ENCODE measurements at regions of chr15 and their contacts with region 1.

Region 1: DNA sequence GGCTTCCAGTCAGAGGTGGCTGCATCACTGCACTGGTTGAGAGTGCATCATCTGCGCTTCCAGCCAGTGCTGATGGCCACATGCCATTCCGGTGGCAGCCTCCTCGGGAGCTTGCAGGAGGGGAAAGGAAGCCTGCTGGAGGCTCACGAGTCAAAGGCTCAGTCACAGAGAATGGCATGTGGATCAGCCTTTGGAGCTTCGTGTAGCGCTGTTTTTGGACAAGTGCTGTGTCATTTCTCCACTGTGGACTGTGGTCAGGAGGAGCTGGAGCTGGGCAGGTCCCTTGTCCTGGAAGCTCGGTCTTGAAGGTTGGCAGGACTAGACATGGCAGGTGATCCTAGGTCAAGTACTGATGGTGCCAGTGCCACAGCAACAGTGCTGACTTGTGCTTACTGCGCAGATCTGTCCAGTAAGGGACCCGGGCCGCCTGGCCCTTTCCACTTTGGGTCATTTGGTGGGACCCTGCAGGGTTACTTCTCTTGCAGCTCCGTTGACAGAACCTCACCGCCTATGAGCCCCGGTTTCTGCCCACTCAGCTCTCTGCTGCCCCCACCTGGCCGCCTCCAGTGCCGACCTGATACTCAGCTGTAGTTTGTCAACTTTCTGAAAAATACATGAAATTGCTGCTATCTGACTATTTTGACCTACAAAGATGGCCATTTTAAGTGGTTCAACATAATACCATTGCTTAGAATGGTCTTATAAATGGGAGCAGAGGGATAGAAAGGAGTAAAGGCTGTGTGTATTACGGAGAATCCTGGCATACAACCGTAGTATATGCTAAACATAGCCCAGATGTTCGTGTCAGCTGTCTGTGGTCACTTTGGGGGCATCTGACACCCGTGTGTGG is 27.6 kb upstream of the TRPM1 start:
- DNase-seq: peak; percentile 78
- H3K4me3 ChIP-seq: peak overlapping the region in 1 of 2 experiments; percentile 42; a peak in 1 of 4 replicates
- H3K27ac ChIP-seq: no peak overlapping the region
- H3K4me1 ChIP-seq: peaks cover 0 to 13% of the 10 kb centered on the region in 2 experiments; a peak in 1 of 4 replicates
- H3K27me3 ChIP-seq: no peaks in the 10 kb centered on the region
- CTCF ChIP-seq: peak; percentile 98
- EP300 ChIP-seq: no peak
- RAD21 ChIP-seq: peak; percentile 94

Region 2: DNA sequence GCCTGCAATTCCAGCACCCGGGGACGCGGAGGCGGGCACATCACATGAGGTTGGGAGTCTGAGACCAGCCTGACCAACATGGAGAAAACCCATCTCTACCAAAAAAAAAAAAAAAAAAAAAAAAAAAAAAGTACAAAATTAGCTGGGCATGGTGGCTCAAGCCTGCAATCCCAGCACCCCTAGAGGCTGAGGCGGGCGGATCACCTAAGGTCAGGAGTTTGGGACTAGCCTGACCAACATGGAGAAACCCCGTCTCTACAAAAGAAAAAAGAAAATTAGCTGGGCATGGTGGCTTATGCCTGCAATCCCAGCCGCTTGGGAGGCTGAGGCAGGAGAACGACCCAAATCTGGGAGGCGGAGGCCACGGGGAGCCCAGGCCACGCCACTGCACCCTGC is 232.9 kb before region 1 on chr15:
- CTCF ChIA-PET with region 1: interaction called, 42 read pairs
- POLR2A ChIA-PET with region 1: no interaction called
- DNase-seq: no peak
- H3K4me3 ChIP-seq: no peak overlapping the region
- H3K27ac ChIP-seq: no peak overlapping the region
- H3K4me1 ChIP-seq: no peaks in the 10 kb centered on the region
- H3K27me3 ChIP-seq: no peaks in the 10 kb centered on the region
- CTCF ChIP-seq: no peak
- EP300 ChIP-seq: no peak
- RAD21 ChIP-seq: no peak

Region 3: GRCh38 chr15:30941520-30941919 is 187.6 kb before region 1 on chr15:
- CTCF ChIA-PET with region 1: interaction called, 10 read pairs
- POLR2A ChIA-PET with region 1: no interaction called
- DNase-seq: no peak
- H3K4me3 ChIP-seq: no peak overlapping the region
- H3K27ac ChIP-seq: no peak overlapping the region
- H3K4me1 ChIP-seq: no peaks in the 10 kb centered on the region
- H3K27me3 ChIP-seq: no peaks in the 10 kb centered on the region
- CTCF ChIP-seq: no peak
- EP300 ChIP-seq: no peak
- RAD21 ChIP-seq: no peak

Region 4: DNA sequence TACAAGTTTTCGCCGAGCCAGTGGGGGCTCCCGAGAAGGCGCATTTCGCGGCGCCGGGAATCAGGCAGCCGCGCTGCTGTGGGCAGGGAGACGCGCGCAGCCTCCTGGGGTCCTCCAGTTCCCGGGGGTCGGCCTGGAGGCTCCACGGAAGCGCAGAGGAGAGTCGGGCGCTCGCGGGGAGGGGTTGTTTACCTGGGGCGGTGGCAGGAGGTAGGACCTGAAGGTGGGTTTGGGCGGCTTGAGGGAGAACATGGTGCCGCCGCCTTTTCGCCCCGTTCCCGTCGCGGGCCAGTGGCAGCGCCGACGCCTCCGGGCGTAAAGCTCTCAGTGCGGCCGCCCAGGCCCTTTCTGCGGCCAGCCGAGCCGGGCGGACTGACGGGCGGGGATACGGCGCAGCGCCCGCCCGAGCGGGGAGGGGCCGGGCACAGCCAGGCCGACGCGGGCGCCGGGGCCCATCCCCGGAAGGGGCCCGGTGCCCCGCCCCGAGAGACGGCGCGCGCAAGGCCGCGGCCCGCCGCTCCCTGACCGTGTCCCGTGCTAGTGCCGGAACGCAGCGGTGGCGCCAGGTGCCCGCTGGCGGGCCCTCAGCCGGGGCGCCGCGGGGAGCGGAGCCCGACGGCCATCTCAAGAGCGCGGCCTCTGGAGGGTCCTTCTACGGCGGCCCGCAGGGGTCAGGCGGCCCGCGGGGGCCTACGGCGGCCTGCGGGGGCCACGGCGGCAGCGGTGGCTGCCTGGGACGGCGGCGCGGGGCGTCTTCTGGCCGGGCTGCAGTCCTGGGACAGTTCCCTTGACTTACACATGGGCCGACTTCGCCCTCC is 137.7 kb before region 1 on chr15 and contains the start of gene MTMR10:
- CTCF ChIA-PET with region 1: interaction called, 10 read pairs
- POLR2A ChIA-PET with region 1: no interaction called
- DNase-seq: peak; percentile 96
- H3K4me3 ChIP-seq: peak within 1 kb of the TSS; percentile 87 to 95
- H3K27ac ChIP-seq: peak within 1 kb of the TSS; percentile 74 to 86
- H3K4me1 ChIP-seq: peaks cover 0 to 6% of the 10 kb centered on the region in 2 experiments; a peak in 2 of 4 replicates
- H3K27me3 ChIP-seq: no peaks in the 10 kb centered on the region
- CTCF ChIP-seq: no peak
- EP300 ChIP-seq: no peak
- RAD21 ChIP-seq: 0 out of 2 replicates have a peak, but pooled peaks have one; percentile 13
- polyA plus RNA-seq, gene MTMR10: 6.4 and 8.0 TPM in 2 replicates

Region 5: DNA sequence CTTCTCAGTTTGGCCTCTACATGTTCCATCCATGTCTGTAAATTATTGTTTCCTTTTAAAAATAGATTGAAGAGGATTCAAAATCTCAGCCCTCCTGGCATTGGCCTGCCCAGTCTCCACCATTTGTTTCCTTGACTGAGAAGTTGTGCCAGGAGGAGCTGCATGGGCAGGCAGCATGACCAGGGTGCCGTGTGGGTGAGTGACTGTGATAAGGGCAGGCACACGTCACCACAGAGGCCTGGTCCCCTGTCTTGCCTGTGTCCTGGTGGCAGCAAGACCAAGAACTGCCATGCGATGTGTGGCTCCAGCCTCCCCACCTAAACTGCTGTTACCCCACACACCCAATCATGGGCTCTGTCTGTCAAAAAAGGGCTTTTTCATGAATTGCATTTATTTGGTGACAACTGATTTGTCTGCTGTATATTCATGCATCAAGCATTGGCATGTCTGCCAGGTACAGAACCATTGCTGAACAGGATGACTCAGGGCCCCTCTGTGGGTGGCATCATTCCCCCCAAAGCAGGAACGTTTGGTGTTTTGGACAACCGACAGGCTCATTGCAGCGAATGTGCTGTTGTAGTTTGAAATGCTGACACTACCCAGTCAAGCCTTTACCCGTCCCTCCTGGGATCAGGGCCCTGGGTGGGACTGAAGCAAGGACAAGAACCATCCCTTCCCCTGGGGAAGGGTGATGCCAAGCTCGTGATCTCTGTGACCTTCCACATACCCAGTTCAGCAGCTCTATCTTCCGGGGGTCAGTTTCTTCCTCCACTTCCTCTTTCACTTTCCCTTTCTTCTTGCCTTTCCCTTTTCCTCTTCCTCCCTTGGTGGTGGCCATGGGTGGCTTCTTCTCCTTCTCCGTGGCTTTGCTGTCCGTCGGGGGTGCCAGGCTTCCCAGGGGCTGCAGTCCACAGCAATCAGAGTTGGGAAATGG is 79.2 kb before region 1 on chr15:
- CTCF ChIA-PET with region 1: no interaction called
- POLR2A ChIA-PET with region 1: no interaction called
- DNase-seq: no peak
- H3K4me3 ChIP-seq: no peak overlapping the region
- H3K27ac ChIP-seq: no peak overlapping the region
- H3K4me1 ChIP-seq: no peaks in the 10 kb centered on the region
- H3K27me3 ChIP-seq: no peaks in the 10 kb centered on the region
- CTCF ChIP-seq: no peak
- EP300 ChIP-seq: no peak
- RAD21 ChIP-seq: no peak

Region 6: GRCh38 chr15:31098953-31099740 is 30.0 kb before region 1 on chr15:
- CTCF ChIA-PET with region 1: interaction called, 38 read pairs
- POLR2A ChIA-PET with region 1: interaction called, 3 read pairs
- DNase-seq: no peak
- H3K4me3 ChIP-seq: no peak overlapping the region
- H3K27ac ChIP-seq: 0 out of 4 replicates have a peak overlapping the region, but pooled peaks of 1 of the 2 experiments have one; percentile 3
- H3K4me1 ChIP-seq: peaks cover 7 to 18% of the 10 kb centered on the region in 2 experiments; a peak in 1 of 4 replicates
- H3K27me3 ChIP-seq: no peaks in the 10 kb centered on the region
- CTCF ChIP-seq: peak; percentile 36
- EP300 ChIP-seq: no peak
- RAD21 ChIP-seq: peak; percentile 27; the same call in 1 of the 2 replicates

Region 7: DNA sequence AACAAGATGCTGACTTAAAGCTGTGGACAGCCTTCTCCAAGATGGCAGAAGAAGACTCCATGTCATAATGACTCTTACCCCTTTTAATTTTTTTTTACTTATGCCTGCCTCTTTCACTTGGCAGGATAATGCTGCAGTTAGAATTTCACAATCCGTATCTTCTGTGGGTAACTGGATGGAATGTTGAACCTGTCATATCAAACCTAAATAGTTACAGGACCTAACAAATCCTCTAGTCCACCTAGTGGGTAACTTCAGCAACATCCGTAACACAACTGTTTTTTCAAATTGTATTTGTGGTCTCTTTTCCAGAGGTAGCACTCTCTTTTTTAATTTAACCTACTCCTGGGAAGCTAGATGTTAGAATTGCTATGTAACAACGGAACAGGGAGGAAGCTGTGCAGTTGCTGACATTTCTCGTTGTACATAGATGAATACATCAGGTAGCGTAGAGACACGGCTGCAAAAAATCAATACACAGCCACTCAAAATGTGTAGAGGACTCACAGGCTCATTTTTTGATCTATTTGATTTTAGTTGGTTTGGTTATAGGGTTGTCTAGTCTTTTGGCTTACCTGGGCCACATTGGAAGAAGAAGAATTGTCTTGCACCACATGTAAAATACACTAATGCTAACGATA is 16.2 kb after region 1 on chr15:
- CTCF ChIA-PET with region 1: interaction called, 32 read pairs
- POLR2A ChIA-PET with region 1: no interaction called
- DNase-seq: no peak
- H3K4me3 ChIP-seq: no peak overlapping the region
- H3K27ac ChIP-seq: no peak overlapping the region
- H3K4me1 ChIP-seq: peaks cover 0 to 5% of the 10 kb centered on the region in 2 experiments; a peak in 1 of 4 replicates
- H3K27me3 ChIP-seq: peaks cover 4% of the 10 kb centered on the region; the same call in 1 of the 2 replicates
- CTCF ChIP-seq: no peak; the same call in 1 of the 2 replicates
- EP300 ChIP-seq: no peak
- RAD21 ChIP-seq: no peak

Region 8: DNA sequence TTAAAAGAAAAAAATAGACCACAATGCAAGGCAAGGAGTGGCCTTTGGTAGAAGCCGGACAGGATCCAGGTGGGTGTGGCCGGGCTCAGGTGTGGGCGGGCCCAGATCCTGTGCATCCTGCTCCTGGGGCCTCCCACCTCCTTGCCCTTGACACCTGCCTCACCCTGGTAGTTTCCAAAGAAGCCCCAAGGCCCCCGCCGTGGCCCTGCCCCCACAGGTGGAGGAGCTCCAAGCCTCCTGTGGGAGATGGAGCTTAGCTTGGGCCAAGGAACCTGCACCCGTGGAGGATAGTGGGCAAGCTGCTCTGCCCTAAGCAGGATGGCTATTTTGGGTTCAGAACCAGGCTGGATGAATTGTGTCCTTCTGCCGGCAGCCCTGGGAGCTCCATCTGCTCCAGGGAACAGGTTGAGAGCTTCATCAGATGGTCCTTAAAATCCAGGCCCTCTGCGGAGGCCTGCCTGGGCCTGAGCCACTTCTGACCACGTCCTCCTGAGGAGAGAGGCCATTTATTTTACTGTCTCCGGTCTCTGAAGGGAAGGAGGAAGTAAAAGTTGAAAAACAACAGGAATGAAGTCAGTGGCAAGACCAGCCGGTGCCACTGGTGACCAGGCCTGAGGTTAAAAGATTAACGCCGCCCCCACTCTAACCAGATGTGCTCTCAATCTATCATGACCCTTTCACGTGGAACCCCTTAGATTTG is 143.6 kb after region 1 on chr15:
- CTCF ChIA-PET with region 1: no interaction called
- POLR2A ChIA-PET with region 1: no interaction called
- DNase-seq: peak; percentile 9
- H3K4me3 ChIP-seq: no peak overlapping the region
- H3K27ac ChIP-seq: no peak overlapping the region
- H3K4me1 ChIP-seq: peaks cover 0 to 20% of the 10 kb centered on the region in 2 experiments; a peak in 1 of 4 replicates
- H3K27me3 ChIP-seq: no peaks in the 10 kb centered on the region
- CTCF ChIP-seq: no peak
- EP300 ChIP-seq: no peak
- RAD21 ChIP-seq: no peak

Region 9: GRCh38 chr15:31811641-31812040 is 682.5 kb after region 1 on chr15:
- CTCF ChIA-PET with region 1: no interaction called
- POLR2A ChIA-PET with region 1: no interaction called
- DNase-seq: no peak
- H3K4me3 ChIP-seq: no peak overlapping the region
- H3K27ac ChIP-seq: no peak overlapping the region
- H3K4me1 ChIP-seq: peaks cover 0 to 15% of the 10 kb centered on the region in 2 experiments; a peak in 1 of 4 replicates
- H3K27me3 ChIP-seq: no peaks in the 10 kb centered on the region
- CTCF ChIP-seq: no peak
- EP300 ChIP-seq: no peak
- RAD21 ChIP-seq: no peak

Measured in SK-N-SH (cell line).